Caco-2 (cell line): ENCODE measurements at regions of chr17 and their contacts with region 1.

Region 1: DNA sequence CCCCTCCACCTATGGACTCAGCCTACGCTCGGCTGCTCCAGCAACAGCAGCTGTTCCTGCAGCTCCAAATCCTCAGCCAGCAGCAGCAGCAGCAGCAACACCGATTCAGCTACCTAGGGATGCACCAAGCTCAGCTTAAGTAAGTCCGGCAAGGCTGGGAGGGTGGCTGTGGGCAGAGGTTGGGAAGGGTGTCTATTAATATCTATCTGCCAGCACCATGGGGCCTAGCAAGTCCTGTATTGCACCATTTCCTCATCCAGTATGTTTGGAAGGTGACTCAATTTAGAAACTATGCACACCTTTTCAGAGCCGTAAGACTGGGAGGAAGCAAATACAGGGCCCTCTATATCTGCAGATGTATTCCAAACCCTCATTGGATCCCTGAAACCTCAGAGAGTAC is 45.0 kb upstream of the ARHGAP44 start:
- DNase-seq: no peak
- H3K4me3 ChIP-seq: no peak overlapping the region
- H3K4me3 Mint-ChIP-seq: no peak overlapping the region
- H3K27ac Mint-ChIP-seq: no peak overlapping the region
- H3K4me1 ChIP-seq: no peaks in the 10 kb centered on the region
- H3K4me1 Mint-ChIP-seq: peaks cover 10% of the 10 kb centered on the region
- H3K27me3 ChIP-seq: no peaks in the 10 kb centered on the region
- H3K27me3 Mint-ChIP-seq: no peaks in the 10 kb centered on the region
- CTCF ChIP-seq: no peak

Region 2: DNA sequence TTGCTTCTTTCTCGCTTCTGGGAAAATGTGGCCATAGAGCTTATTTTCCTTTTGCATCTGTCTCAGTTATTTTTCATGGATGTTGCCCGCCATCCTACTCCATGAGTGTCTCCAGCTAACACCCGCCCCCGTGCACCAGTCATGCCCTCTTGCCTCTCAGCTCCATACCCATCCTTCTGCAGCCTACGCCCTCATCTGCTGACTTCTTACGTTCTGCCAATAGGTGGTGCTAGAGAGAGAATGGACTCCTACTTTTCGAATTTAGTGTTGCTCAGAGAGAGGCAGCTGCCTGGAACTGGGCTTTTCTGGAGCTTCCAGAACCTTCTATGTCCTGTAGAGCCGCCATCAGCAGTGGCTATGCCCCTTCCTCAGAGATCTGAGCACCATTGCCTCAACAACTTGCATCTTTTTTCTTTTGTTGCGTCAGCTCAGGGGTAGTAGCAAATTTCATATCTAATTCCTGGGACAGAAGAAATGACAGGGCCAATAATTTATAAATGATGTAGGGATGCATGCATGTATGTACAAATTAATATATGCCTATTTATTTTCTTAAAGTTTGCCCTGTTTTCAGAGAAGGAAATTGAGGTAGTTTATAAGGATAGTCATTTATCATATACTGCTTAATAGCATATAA is 198.3 kb before region 1 on chr17:
- CTCF ChIA-PET with region 1: interaction called, 9 read pairs
- POLR2A ChIA-PET with region 1: no interaction called
- intact Hi-C with region 1: loop called (anchors 5 kb)
- DNase-seq: peak in 1 of 2 experiments; percentile 37
- H3K4me3 ChIP-seq: no peak overlapping the region
- H3K4me3 Mint-ChIP-seq: no peak overlapping the region
- H3K27ac Mint-ChIP-seq: no peak overlapping the region
- H3K4me1 ChIP-seq: no peaks in the 10 kb centered on the region
- H3K4me1 Mint-ChIP-seq: no peaks in the 10 kb centered on the region
- H3K27me3 ChIP-seq: no peaks in the 10 kb centered on the region
- H3K27me3 Mint-ChIP-seq: no peaks in the 10 kb centered on the region
- CTCF ChIP-seq: peak in 1 of 2 experiments; percentile 48

Region 3: DNA sequence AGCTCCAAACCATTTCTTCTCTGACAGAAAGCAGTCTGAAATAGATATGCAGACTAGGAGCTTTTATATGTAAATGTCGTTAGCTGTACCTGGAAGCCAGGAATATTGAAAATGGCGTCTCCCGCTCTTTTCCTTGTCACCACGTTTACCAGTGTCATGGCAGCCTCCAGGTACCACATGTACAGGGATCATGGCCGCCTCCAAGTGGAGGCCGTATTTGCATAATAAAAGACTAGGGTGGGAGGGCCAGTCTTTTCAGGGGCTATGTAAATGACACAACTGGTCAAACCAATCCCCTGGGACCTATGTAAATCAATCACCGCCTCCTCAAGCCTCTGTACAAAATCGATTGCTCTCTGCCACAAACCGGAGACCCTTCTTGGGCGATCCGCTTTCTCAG is 24.4 kb before region 1 on chr17:
- CTCF ChIA-PET with region 1: no interaction called
- POLR2A ChIA-PET with region 1: no interaction called
- intact Hi-C with region 1: no loop called
- DNase-seq: no peak
- H3K4me3 ChIP-seq: no peak overlapping the region
- H3K4me3 Mint-ChIP-seq: no peak overlapping the region
- H3K27ac Mint-ChIP-seq: no peak overlapping the region
- H3K4me1 ChIP-seq: no peaks in the 10 kb centered on the region
- H3K4me1 Mint-ChIP-seq: peaks cover 6% of the 10 kb centered on the region
- H3K27me3 ChIP-seq: no peaks in the 10 kb centered on the region
- H3K27me3 Mint-ChIP-seq: no peaks in the 10 kb centered on the region
- CTCF ChIP-seq: no peak